ENCODE measurements at regions of chr18 and their contacts with region 1.

Region 1: DNA sequence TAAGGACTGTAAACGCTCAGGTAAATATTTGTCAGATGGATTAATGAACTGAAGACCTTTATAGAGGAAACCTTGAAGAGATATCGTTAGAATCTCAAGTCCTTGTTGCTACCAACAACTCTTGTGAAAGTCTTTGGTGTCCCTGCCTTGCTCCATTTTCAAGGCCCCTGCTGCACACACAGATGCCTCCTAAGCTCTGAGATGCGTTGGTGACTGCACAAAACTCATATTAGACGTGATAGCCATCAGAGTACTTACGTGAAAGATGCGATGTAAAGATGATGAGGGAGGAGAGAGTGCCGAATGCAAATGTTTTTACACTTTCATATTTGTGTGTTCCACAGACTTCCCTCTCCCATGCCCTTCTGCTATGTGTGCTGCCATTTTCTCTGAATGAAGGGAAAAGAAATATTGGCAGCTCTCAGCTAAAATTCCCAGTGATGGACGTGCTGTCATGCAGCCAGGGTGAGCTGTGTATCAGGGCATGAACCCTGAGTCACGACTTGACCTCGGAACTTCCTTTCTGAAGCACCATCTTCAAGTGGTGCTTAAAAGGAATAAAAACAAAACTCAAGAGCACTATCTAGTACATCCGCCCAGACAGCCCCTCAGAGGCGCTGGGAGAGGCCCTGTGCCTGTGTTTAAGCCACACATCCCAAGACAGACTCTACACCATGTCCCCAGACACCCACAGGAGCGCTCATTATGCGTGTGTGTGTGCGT is 117.4 kb downstream of the FAM210A start:
- DNase-seq: no peak
- ATAC-seq: no peak
- H3K4me3 ChIP-seq: no peak overlapping the region
- H3K27ac ChIP-seq: no peak overlapping the region
- H3K4me1 ChIP-seq: peaks cover 0 to 4% of the 10 kb centered on the region in 2 experiments; a peak in 2 of 5 replicates
- H3K27me3 ChIP-seq: peaks cover 25 to 44% of the 10 kb centered on the region in 2 experiments
- CTCF ChIP-seq: no peak
- EP300 ChIP-seq: no peak
- POLR2A ChIP-seq: no peak
- RAD21 ChIP-seq: no peak

Region 2: DNA sequence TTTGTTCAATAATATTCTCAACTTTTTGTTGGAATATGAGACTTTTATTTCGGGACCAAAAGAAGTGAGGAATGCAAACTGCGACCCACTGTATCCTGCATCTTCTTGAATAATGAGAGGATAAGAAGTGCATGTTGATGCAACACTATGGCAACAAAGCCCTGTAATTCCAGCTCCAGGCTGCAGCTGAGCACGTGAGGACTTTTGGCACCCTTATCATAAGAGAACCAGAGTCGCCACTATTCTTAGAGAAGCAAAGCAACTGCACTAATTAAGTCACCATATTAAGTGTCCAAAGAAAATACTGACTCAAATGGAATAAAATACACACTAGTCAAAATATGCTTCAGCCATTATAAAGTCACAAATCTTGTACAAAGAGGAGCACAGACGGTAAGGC is 51.5 kb after region 1 on chr18:
- CTCF ChIA-PET with region 1: no interaction called
- POLR2A ChIA-PET with region 1: no interaction called
- in situ Hi-C with region 1: no loop called
- intact Hi-C with region 1: loop called (anchors 10 kb)
- DNase-seq: no peak
- ATAC-seq: peak; percentile 72
- H3K4me3 ChIP-seq: no peak overlapping the region
- H3K27ac ChIP-seq: no peak overlapping the region
- H3K4me1 ChIP-seq: no peaks in the 10 kb centered on the region
- H3K27me3 ChIP-seq: no peaks in the 10 kb centered on the region; a peak in 1 of 5 replicates
- CTCF ChIP-seq: no peak
- EP300 ChIP-seq: peak; percentile 44; the same call in 1 of the 2 replicates
- POLR2A ChIP-seq: no peak
- RAD21 ChIP-seq: no peak

Region 3: DNA sequence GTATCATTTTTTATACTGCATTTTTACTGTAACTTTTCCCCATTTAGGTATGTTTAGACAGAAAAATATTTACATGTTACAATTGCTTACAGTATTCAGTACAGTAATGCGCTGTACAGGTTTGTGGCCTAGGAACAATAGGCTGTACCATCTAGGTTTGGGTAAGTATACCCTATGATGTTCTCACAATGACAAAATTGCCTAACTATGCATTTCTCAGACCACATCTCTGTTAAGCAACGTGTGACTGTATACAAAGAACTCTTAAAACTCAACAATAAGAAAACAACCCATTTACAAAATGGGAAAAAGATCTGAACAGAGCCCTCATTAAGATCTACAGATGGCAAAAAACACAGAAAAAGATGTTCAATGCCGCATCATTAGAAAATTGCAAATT is 88.0 kb after region 1 on chr18:
- CTCF ChIA-PET with region 1: no interaction called
- POLR2A ChIA-PET with region 1: no interaction called
- in situ Hi-C with region 1: no loop called
- intact Hi-C with region 1: no loop called
- DNase-seq: no peak
- ATAC-seq: no peak
- H3K4me3 ChIP-seq: no peak overlapping the region
- H3K27ac ChIP-seq: no peak overlapping the region
- H3K4me1 ChIP-seq: no peaks in the 10 kb centered on the region
- H3K27me3 ChIP-seq: no peaks in the 10 kb centered on the region
- CTCF ChIP-seq: no peak
- EP300 ChIP-seq: no peak
- POLR2A ChIP-seq: no peak
- RAD21 ChIP-seq: no peak

Region 4: GRCh38 chr18:14144628-14144895 is 535.6 kb after region 1 on chr18:
- CTCF ChIA-PET with region 1: no interaction called
- POLR2A ChIA-PET with region 1: no interaction called
- in situ Hi-C with region 1: no loop called
- intact Hi-C with region 1: no loop called
- DNase-seq: no peak
- ATAC-seq: no peak
- H3K4me3 ChIP-seq: no peak overlapping the region
- H3K27ac ChIP-seq: no peak overlapping the region
- H3K4me1 ChIP-seq: peaks cover 0 to 3% of the 10 kb centered on the region in 2 experiments; a peak in 1 of 5 replicates
- H3K27me3 ChIP-seq: peaks cover 0 to 4% of the 10 kb centered on the region in 2 experiments; a peak in 2 of 5 replicates
- CTCF ChIP-seq: no peak
- EP300 ChIP-seq: no peak
- POLR2A ChIP-seq: no peak
- RAD21 ChIP-seq: no peak

Measured in K562 (cell line).